PC-9 (cell line): ENCODE measurements at regions of chr2 and their contacts with region 1.

Region 1: GRCh38 chr2:224520064-224520463 is 65.1 kb downstream of the CUL3 start:
- DNase-seq: no peak
- H3K4me3 ChIP-seq: no peak overlapping the region
- H3K27ac ChIP-seq: peak overlapping the region; percentile 4
- H3K4me1 ChIP-seq: peaks cover 30% of the 10 kb centered on the region
- H3K27me3 ChIP-seq: no peaks in the 10 kb centered on the region
- CTCF ChIP-seq: no peak

Region 2: GRCh38 chr2:224532931-224533330 is 12.9 kb after region 1 on chr2:
- CTCF ChIA-PET with region 1: no interaction called
- POLR2A ChIA-PET with region 1: no interaction called
- intact Hi-C with region 1: loop called (anchors 2 kb)
- DNase-seq: no peak
- H3K4me3 ChIP-seq: no peak overlapping the region
- H3K27ac ChIP-seq: no peak overlapping the region; the same call in 1 of the 2 replicates
- H3K4me1 ChIP-seq: no peaks in the 10 kb centered on the region
- H3K27me3 ChIP-seq: no peaks in the 10 kb centered on the region
- CTCF ChIP-seq: no peak

Region 3: GRCh38 chr2:224764565-224765236 is 244.6 kb after region 1 on chr2:
- CTCF ChIA-PET with region 1: interaction called, 12 read pairs
- POLR2A ChIA-PET with region 1: no interaction called
- intact Hi-C with region 1: no loop called
- DNase-seq: no peak
- H3K4me3 ChIP-seq: no peak overlapping the region
- H3K27ac ChIP-seq: no peak overlapping the region
- H3K4me1 ChIP-seq: no peaks in the 10 kb centered on the region
- H3K27me3 ChIP-seq: no peaks in the 10 kb centered on the region
- CTCF ChIP-seq: no peak

Region 4: DNA sequence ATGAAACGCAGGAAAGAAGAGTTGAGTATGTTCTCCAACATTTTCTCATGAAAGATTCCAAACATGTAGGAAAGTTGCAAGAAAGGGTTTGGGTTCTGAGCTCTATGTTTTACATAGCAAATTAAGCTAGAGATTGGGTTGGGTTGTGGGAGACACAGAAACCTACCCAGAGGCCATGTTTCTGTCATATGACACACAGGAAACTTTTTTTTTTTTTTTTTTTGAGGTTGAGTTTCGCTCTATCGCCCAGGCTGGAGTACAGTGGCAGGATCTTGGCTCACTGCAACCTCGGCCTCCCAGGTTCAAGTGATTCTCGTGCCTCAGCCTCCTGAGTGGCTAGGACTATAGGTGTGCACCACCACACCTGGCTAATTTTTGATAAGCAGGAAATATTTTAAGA is 464.6 kb after region 1 on chr2:
- CTCF ChIA-PET with region 1: no interaction called
- POLR2A ChIA-PET with region 1: no interaction called
- intact Hi-C with region 1: no loop called
- DNase-seq: no peak
- H3K4me3 ChIP-seq: no peak overlapping the region
- H3K27ac ChIP-seq: no peak overlapping the region
- H3K4me1 ChIP-seq: no peaks in the 10 kb centered on the region
- H3K27me3 ChIP-seq: 0 out of 2 replicates have a peak, but pooled peaks cover 5% of the 10 kb centered on the region
- CTCF ChIP-seq: no peak